Colonic mucosa (tissue), 4 donors: ENCODE measurements at regions of chr7 and their contacts with region 1.

Region 1: DNA sequence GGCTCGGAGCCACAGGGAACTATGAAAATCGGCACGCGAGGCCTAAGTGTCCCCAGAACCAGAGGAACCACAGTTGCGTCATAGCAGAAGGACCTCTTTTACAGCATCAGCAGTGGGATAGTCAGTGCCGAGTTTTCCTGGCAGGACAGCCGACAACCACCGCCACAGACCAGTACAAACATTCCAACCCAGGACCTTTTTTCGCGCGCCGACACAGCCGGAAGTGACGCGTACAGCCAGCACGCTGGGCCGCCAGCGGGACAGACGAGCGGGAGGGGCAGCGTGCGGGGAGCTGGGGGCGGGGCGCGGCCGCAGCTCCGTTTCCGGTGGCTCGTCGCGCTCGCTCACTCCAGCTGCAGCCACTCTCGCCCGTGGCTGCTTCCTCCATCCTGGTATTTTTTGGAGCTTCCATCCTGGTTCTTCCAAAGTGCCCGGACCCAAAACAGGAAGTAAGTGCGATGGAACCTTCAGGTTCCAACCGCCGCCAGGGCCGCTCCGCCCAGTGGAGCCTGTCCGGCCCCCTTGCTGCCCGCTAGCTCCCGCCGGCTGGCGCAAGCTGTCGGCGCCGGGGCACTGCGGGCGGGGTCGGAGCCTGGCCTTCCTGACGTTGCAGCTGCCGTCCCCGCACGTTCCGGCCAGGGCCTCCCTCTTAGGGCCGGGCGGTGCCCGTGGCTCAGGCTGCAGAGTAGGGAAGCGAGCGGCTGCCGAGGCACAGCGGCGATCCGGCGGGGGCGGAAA is at the start of gene DMTF1:
- DNase-seq: peak; percentile 94
- H3K4me3 ChIP-seq: peak within 1 kb of the TSS; percentile 54
- H3K27ac ChIP-seq: peak within 1 kb of the TSS; percentile 95
- H3K4me1 ChIP-seq: peaks cover 18% of the 10 kb centered on the region
- H3K27me3 ChIP-seq: no peaks in the 10 kb centered on the region
- CTCF ChIP-seq: no peak
- total RNA-seq, gene DMTF1: 44.4 to 66.0 TPM

Region 2: DNA sequence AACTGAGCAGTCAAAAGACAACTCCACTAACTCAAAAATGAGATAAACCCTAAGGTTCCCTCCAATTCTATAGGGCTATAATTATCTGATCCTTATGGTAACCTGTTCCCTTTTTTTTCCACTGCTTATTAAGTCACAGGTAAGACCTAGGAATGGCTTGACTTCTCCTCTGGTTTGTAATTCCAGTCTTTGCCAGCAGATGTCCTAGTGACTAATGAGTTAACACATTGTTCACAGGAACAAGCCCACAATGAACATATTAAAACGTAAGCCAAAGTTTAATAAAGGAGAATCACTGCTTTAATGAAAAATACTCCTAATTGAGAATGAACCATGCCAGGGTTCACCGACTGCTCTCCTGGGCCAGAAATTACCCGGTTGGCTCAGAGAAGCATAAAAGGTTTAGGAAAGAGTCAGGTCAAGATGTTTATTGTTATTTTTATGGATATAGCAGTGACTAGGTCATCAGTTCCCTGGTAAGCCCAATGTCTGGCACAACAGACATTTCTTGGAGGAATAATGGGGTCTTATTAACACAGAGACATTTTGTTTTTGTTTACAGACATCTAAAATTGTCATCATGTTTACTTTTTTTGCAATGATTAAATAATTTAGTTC is 213.0 kb before region 1 on chr7:
- intact Hi-C with region 1: loop called (anchors 2 kb)
- DNase-seq: peak; percentile 80
- H3K4me3 ChIP-seq: no peak overlapping the region
- H3K27ac ChIP-seq: no peak overlapping the region
- H3K4me1 ChIP-seq: no peaks in the 10 kb centered on the region
- H3K27me3 ChIP-seq: no peaks in the 10 kb centered on the region
- CTCF ChIP-seq: peak; percentile 83

Region 3: DNA sequence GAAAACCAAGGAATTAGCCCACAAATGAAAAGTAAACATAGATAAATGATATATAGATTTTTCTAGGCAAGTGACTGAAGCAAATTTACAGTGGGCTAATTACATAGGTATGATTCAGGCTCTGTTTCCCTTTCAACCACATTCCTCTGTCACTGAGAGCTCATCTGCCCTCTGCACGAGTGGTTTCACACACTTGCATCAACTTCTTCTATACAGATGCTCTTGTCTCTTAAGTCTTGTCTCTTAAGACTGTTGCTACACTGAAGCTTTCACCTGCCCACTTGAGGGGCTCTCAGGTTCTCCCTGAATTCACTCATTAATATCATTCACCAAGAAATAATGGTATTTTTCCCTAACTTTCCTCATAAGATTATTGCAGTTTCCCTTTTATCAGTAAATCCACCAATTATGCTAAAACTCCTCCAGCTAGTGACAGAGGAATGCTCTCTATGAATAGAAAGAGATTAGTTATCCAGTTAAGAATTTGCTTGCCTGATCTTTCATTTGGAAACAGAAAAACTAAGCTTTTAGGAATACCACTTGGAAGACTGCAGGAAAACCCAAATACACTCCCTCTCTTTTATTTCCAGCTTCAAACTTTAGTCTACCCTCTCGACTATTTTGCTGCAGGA is 188.6 kb before region 1 on chr7:
- intact Hi-C with region 1: no loop called
- DNase-seq: no peak
- H3K4me3 ChIP-seq: no peak overlapping the region
- H3K27ac ChIP-seq: no peak overlapping the region
- H3K4me1 ChIP-seq: peaks cover 9% of the 10 kb centered on the region
- H3K27me3 ChIP-seq: no peaks in the 10 kb centered on the region
- CTCF ChIP-seq: no peak

Region 4: GRCh38 chr7:87178320-87178719 is 26.0 kb after region 1 on chr7:
- intact Hi-C with region 1: no loop called
- DNase-seq: no peak
- H3K4me3 ChIP-seq: no peak overlapping the region
- H3K27ac ChIP-seq: no peak overlapping the region
- H3K4me1 ChIP-seq: no peaks in the 10 kb centered on the region
- H3K27me3 ChIP-seq: no peaks in the 10 kb centered on the region
- CTCF ChIP-seq: no peak

Region 5: GRCh38 chr7:87345166-87345927 is 193.1 kb after region 1 on chr7 and contains the start of gene CROT:
- intact Hi-C with region 1: loop called (anchors 10 kb)
- DNase-seq: peak; percentile 98
- H3K4me3 ChIP-seq: peak within 1 kb of the TSS; percentile 68
- H3K27ac ChIP-seq: peak within 1 kb of the TSS; percentile 90
- H3K4me1 ChIP-seq: no peaks in the 10 kb centered on the region
- H3K27me3 ChIP-seq: no peaks in the 10 kb centered on the region
- CTCF ChIP-seq: no peak
- total RNA-seq, gene CROT: 13.6 to 22.6 TPM

Region 6: DNA sequence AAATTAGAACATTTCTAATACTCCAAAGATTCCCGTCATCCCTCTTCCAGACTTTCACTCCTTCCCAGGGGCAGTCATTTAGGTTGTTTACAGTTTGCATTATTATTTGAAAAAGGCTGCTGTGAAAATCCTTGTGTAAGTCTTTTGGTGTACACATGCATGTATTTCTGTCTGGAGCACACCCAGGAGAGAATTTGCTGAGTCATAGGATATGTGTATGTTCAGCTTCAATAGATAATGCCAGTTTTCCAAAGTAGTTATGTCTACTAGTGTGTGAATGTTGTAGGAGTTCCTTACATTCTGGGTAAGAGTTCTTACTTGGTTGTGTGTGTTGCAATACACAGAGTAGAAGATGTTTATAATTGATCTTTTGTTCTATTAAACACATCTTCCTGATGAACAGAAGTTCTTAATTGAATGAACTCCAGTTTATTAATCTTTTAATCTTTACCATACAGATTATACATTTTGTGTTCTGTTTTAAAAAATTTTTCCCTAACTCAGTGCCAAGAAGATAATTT is 218.4 kb after region 1 on chr7:
- intact Hi-C with region 1: no loop called
- DNase-seq: no peak
- H3K4me3 ChIP-seq: no peak overlapping the region
- H3K27ac ChIP-seq: no peak overlapping the region
- H3K4me1 ChIP-seq: no peaks in the 10 kb centered on the region
- H3K27me3 ChIP-seq: no peaks in the 10 kb centered on the region
- CTCF ChIP-seq: no peak

Region 7: GRCh38 chr7:87876040-87876868 is 724.0 kb after region 1 on chr7 and contains the starts of genes DBF4 and SLC25A40:
- intact Hi-C with region 1: loop called (anchors 10 kb)
- DNase-seq: peak; percentile 98
- H3K4me3 ChIP-seq: peak within 1 kb of the TSS; percentile 85
- H3K27ac ChIP-seq: peak within 1 kb of the TSS; percentile 98
- H3K4me1 ChIP-seq: peaks cover 3% of the 10 kb centered on the region
- H3K27me3 ChIP-seq: no peaks in the 10 kb centered on the region
- CTCF ChIP-seq: no peak
- total RNA-seq, gene DBF4: 17.8 to 31.4 TPM
- total RNA-seq, gene SLC25A40: 25.7 to 39.6 TPM